Ascending aorta (tissue), 2 donors: ENCODE measurements at regions of chr1 and their contacts with region 1.

Region 1: DNA sequence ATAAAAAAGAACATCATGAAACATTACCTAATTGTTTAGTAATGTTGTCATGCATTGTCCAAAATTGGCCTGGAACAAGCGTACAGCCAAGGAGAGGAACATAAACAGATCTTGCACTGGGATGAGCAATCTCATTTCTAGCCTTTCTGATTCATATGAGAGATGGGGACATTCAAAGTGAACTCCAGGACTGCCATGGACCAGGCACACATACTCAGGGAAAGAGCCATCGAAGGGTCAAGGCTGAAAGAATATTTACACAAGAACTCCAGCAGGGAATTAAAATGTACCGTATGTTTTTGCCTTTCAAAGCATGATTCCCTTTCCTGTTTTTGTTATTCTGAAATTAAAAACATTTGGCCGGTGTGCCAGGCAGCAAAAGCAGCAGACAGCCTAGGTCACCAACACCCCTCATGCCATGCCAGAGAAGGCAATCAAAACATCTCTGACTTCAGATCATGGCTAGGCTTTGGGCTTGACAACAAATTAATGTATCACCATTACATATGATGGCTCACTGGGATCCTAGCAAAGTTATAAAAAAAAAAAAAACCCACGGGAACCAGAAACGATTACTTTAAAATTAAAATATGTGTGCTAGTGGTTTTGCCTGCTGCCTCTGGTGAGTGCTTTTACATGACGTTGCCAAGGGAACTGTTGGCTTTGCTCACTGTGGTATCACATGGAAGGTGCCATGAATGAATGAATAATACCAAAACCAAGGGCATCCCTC is 159.8 kb downstream of the TGFBR3 start:
- DNase-seq: peak in 1 of 2 donors; percentile 71
- H3K4me3 ChIP-seq: no peak overlapping the region
- H3K27ac ChIP-seq: peak overlapping the region; percentile 71 to 80
- H3K4me1 ChIP-seq: peaks cover 0 to 23% of the 10 kb centered on the region in 2 donors
- H3K27me3 ChIP-seq: no peaks in the 10 kb centered on the region
- CTCF ChIP-seq: no peak

Region 2: DNA sequence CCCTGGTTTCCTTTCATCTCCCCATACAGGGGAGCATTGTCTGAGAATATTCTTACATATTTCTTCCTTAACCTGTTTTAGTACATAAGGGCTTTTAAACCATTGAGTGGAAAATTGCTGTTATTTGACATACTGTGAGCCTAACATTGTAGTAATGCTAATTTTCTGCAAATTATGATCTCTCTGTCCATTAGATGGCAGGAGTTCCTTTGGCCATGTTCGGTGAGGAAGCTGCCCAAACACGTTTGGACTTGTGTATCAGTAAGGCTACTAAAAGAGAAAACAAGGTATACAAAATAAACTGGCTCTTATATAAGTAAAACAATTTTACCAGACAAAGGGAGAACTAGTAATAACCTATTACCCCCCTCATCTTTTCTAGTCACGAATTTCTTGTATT is 196.3 kb before region 1 on chr1:
- intact Hi-C with region 1: no loop called
- DNase-seq: no peak
- H3K4me3 ChIP-seq: no peak overlapping the region
- H3K27ac ChIP-seq: no peak overlapping the region
- H3K4me1 ChIP-seq: no peaks in the 10 kb centered on the region
- H3K27me3 ChIP-seq: no peaks in the 10 kb centered on the region
- CTCF ChIP-seq: peak in 2 of 3 experiments; percentile 23 to 36

Region 3: DNA sequence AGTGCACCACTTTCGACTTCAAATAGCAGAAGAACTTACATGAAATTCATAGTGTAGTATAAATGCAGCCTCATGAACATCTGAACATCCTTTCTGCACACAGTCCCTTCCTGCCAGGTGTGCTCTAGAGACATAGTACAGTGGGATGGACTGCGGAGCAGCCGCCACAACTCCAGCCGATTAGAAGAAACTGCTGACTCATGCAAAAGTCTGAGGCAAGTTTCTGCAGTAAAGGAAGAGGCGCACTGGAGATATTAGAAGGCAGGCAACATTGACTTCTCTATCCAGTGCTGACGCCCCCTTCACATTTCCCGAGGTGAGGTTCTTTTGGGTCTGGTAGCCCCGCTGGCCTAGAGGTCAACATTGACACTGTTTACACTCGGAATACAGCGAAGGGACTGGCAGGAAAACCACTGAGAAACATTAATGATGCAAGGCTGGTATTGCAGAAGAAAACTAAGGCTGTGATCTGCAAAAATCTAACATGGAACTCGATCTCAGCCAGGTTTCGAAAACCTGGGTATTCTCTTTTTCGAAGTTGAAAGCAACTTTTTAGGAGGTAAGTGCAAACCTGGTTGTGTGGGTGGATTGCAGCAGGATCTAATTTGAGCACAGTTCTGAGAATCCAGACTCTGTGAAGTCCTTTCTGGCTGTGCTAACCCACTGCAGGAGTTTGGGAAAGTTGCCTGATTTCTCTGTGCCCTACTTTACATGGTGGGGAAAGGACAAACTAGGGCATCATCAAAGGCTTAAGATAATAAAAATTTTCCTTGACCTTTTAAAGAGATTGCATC is 134.8 kb before region 1 on chr1:
- intact Hi-C with region 1: no loop called
- DNase-seq: no peak
- H3K4me3 ChIP-seq: no peak overlapping the region
- H3K27ac ChIP-seq: no peak overlapping the region
- H3K4me1 ChIP-seq: no peaks in the 10 kb centered on the region
- H3K27me3 ChIP-seq: no peaks in the 10 kb centered on the region
- CTCF ChIP-seq: no peak

Region 4: GRCh38 chr1:91697416-91697815 is 28.7 kb before region 1 on chr1:
- intact Hi-C with region 1: loop called (anchors 5 kb)
- DNase-seq: no peak
- H3K4me3 ChIP-seq: no peak overlapping the region
- H3K27ac ChIP-seq: peak overlapping the region in 1 of 2 donors; percentile 30
- H3K4me1 ChIP-seq: peaks cover 0 to 27% of the 10 kb centered on the region in 2 donors
- H3K27me3 ChIP-seq: no peaks in the 10 kb centered on the region
- CTCF ChIP-seq: no peak

Region 5: GRCh38 chr1:91754348-91754747 is 28.2 kb after region 1 on chr1:
- intact Hi-C with region 1: no loop called
- DNase-seq: no peak
- H3K4me3 ChIP-seq: no peak overlapping the region
- H3K27ac ChIP-seq: peak overlapping the region in 1 of 2 donors; percentile 30
- H3K4me1 ChIP-seq: peaks cover 0 to 27% of the 10 kb centered on the region in 2 donors
- H3K27me3 ChIP-seq: no peaks in the 10 kb centered on the region
- CTCF ChIP-seq: no peak